Dendritic cell treated with granulocyte-macrophage colony-stimulating factor and Interleukin-4, amounts not matched to agents 40 ng/mL and 50 ng/mL, for 4 days (primary cell): ENCODE measurements at regions of chr1 and their contacts with region 1.

Region 1: GRCh38 chr1:145845514-145846161 is at the start of gene NUDT17:
- H3K4me3 Mint-ChIP-seq: no peak within 1 kb of the TSS
- H3K27ac Mint-ChIP-seq: no peak within 1 kb of the TSS
- H3K4me1 Mint-ChIP-seq: no peaks in the 10 kb centered on the region
- H3K27me3 Mint-ChIP-seq: peaks cover 3% of the 10 kb centered on the region

Region 2: GRCh38 chr1:145912128-145912641 is 66.5 kb after region 1 on chr1:
- intact Hi-C with region 1: loop called (anchors 5 kb)
- H3K4me3 Mint-ChIP-seq: no peak overlapping the region
- H3K27ac Mint-ChIP-seq: no peak overlapping the region
- H3K4me1 Mint-ChIP-seq: peaks cover 6% of the 10 kb centered on the region
- H3K27me3 Mint-ChIP-seq: no peaks in the 10 kb centered on the region

Region 3: GRCh38 chr1:146012737-146013403 is 167.2 kb after region 1 on chr1:
- intact Hi-C with region 1: loop called (anchors 2 kb)
- H3K4me3 Mint-ChIP-seq: no peak overlapping the region
- H3K27ac Mint-ChIP-seq: no peak overlapping the region
- H3K4me1 Mint-ChIP-seq: peaks cover 10% of the 10 kb centered on the region
- H3K27me3 Mint-ChIP-seq: peaks cover 18% of the 10 kb centered on the region